ENCODE measurements at regions of chr21 and their contacts with region 1.

Region 1: DNA sequence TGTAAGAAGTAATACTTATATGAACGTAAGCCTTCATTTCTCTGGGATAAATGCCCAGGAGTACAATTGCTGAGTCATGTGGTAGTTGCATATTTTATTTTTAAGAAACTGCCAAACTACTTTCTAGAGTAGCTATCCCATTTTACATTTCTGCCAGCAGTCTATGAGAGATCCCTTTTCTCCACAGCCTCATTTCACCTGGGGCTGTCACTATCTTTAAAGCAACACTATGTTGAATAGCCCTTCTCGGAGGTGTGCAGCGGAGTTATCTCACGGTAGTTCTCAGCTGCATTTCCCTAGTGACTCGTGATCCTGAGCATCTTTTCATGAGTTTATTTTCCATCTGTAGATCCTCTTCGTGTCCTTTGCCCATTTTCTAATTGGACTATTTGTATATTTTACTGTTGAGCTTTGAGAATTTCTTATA is 93.4 kb downstream of the ADARB1 start:
- DNase-seq: peak in 2 of 3 donors; percentile 60 to 64
- H3K4me3 ChIP-seq: peak overlapping the region in 2 of 7 experiments; percentile 38 to 60
- H3K27ac ChIP-seq: peak overlapping the region in 1 of 2 experiments; percentile 65
- H3K4me1 ChIP-seq: peaks cover 3 to 42% (median 26%) of the 10 kb centered on the region in 4 experiments
- H3K27me3 ChIP-seq: no peaks in the 10 kb centered on the region

Region 2: GRCh38 chr21:45152265-45152746 is 15.5 kb before region 1 on chr21:
- CTCF ChIA-PET with region 1: interaction called, 22 read pairs
- POLR2A ChIA-PET with region 1: interaction called, 4 read pairs
- DNase-seq: peak; percentile 87 to 98 (median 96)
- H3K4me3 ChIP-seq: peak overlapping the region; percentile 35 to 75 (median 59)
- H3K27ac ChIP-seq: peak overlapping the region; percentile 18 to 76
- H3K4me1 ChIP-seq: peaks cover 4 to 38% (median 26%) of the 10 kb centered on the region in 4 experiments
- H3K27me3 ChIP-seq: no peaks in the 10 kb centered on the region